A673 (cell line): ENCODE measurements at regions of chr16 and their contacts with region 1.

Region 1: GRCh38 chr16:25925421-25925820 is 233.7 kb downstream of the HS3ST4 start:
- DNase-seq: no peak
- H3K4me3 ChIP-seq: no peak overlapping the region
- H3K27ac ChIP-seq: no peak overlapping the region
- H3K4me1 ChIP-seq: peaks cover 7% of the 10 kb centered on the region
- H3K27me3 ChIP-seq: no peaks in the 10 kb centered on the region
- CTCF ChIP-seq: no peak

Region 2: GRCh38 chr16:25896412-25896811 is 29.0 kb before region 1 on chr16:
- CTCF ChIA-PET with region 1: no interaction called
- POLR2A ChIA-PET with region 1: no interaction called
- intact Hi-C with region 1: no loop called
- DNase-seq: peak; percentile 84
- H3K4me3 ChIP-seq: no peak overlapping the region
- H3K27ac ChIP-seq: peak overlapping the region; percentile 70
- H3K4me1 ChIP-seq: peaks cover 30% of the 10 kb centered on the region
- H3K27me3 ChIP-seq: no peaks in the 10 kb centered on the region
- CTCF ChIP-seq: no peak

Region 3: DNA sequence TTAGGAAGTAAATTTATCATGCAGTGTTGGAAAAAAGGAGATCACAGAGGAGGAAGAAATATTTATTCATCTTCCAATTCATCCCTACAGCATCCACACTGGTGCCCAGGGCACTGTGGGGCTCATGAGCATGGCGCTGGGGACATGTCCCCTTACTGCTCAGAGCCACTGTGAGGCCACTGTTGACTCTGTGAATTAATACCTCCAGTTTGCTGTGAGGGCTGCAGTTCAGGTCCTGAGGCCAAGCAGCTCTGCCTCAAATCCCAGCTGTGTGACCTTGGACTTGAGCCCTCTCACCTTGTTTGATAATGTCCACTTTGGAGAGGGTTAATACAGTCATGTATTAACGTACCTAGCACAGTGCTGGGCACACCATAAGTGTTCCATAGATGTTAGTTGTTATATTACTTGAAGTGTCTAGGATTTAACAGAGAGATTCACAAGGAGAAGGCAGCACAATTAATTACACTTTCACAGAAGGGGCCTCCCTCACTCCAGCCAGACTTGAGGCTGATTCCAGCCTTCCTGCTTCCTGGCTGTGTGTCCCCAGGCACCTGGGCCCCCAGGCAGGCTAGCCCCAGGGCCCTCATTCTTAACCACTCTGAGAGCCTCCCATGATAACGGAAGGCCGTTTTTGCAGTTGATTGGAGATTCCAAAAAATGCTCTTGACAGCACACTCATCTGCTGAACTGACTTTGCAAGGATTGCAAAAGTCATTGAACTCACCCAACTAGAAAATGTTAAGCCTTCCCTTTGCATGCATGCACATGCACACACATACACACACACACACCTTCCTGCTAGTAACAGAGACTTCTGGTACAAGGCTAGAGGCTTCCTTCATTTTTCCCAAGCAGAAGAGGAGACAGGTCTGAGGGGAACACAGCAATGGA is 1653.9 kb after region 1 on chr16:
- CTCF ChIA-PET with region 1: no interaction called
- POLR2A ChIA-PET with region 1: interaction called, 11 read pairs
- intact Hi-C with region 1: no loop called
- DNase-seq: no peak
- H3K4me3 ChIP-seq: no peak overlapping the region
- H3K27ac ChIP-seq: no peak overlapping the region
- H3K4me1 ChIP-seq: no peaks in the 10 kb centered on the region
- H3K27me3 ChIP-seq: no peaks in the 10 kb centered on the region
- CTCF ChIP-seq: no peak